CD14-positive monocyte (primary cell): ENCODE measurements at regions of chr4 and their contacts with region 1.

Region 1: GRCh38 chr4:42519803-42520417 is 122.6 kb downstream of the SHISA3 start:
- DNase-seq: peak; percentile 12 to 32 (median 20)
- H3K4me3 ChIP-seq: no peak overlapping the region
- H3K4me3 Mint-ChIP-seq: no peak overlapping the region
- H3K27ac ChIP-seq: no peak overlapping the region
- H3K27ac Mint-ChIP-seq: no peak overlapping the region
- H3K4me1 ChIP-seq: no peaks in the 10 kb centered on the region
- H3K4me1 Mint-ChIP-seq: no peaks in the 10 kb centered on the region
- H3K27me3 ChIP-seq: no peaks in the 10 kb centered on the region
- H3K27me3 Mint-ChIP-seq: no peaks in the 10 kb centered on the region
- CTCF ChIP-seq: peak; percentile 81

Region 2: DNA sequence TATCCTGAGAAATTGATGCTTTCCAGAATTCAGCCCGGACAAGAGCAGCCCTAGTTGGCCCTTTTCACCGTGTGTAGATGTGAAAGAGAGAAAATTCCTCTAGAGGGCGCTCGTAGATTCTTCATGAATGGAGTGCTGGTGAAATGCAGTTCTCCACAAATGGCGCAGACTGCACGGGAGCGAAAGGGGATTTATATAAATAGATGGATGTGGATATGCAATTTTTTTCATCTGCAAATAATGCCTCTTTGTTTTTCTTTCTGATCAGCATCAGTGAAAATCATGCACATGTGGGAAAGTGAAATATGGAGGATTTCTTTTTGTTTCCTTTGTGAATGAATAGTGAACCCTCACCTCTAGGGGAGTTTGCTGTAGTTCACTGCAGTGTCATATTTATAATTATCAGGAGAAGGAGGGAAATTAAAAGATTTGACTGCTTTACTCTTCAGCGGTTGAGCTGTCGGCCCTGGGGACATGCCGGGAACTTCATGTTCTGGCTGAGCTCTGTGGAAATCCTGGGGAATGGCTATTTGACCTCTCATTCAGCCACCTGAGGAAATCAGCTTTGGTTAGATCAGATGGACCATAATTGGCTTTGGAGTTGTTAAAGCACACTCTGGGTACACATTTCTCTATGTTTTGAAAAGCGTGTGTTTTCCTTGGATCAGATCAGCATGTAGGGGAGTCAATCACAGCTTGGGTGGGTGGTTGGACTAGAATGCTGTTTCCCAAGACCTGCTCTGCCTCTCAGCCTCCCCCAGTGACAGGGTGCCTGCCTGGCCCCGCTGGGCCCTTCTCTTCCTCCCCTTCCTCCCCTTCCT is 237.6 kb before region 1 on chr4:
- intact Hi-C with region 1: loop called in 1 of 2 experiments (anchors 5 kb)
- DNase-seq: peak; percentile 3 to 32 (median 27)
- H3K4me3 ChIP-seq: no peak overlapping the region
- H3K4me3 Mint-ChIP-seq: no peak overlapping the region
- H3K27ac ChIP-seq: no peak overlapping the region
- H3K27ac Mint-ChIP-seq: no peak overlapping the region
- H3K4me1 ChIP-seq: peaks cover 0 to 5% of the 10 kb centered on the region in 2 donors
- H3K4me1 Mint-ChIP-seq: peaks cover 13% of the 10 kb centered on the region
- H3K27me3 ChIP-seq: no peaks in the 10 kb centered on the region
- H3K27me3 Mint-ChIP-seq: peaks cover 0 to 2% (median 0%) of the 10 kb centered on the region in 3 donors
- CTCF ChIP-seq: peak; percentile 76